ENCODE measurements at regions of chr4 and their contacts with region 1.

Region 1: GRCh38 chr4:74098450-74098994 is 473 bp downstream of the CXCL2 start:
- DNase-seq: peak in 1 of 4 experiments; percentile 37
- ATAC-seq: no peak
- H3K4me3 ChIP-seq: peak overlapping the region; percentile 75
- H3K27ac ChIP-seq: peak overlapping the region; percentile 93
- H3K4me1 ChIP-seq: peaks cover 17 to 39% of the 10 kb centered on the region in 2 experiments; a peak in 4 of 5 replicates
- H3K27me3 ChIP-seq: no peaks in the 10 kb centered on the region
- CTCF ChIP-seq: no peak
- EP300 ChIP-seq: no peak
- POLR2A ChIP-seq: no peak
- RAD21 ChIP-seq: no peak

Region 2: GRCh38 chr4:73704314-73705055 is 394.0 kb before region 1 on chr4:
- CTCF ChIA-PET with region 1: no interaction called
- POLR2A ChIA-PET with region 1: no interaction called
- in situ Hi-C with region 1: no loop called
- intact Hi-C with region 1: loop called (anchors 5 kb)
- DNase-seq: peak; percentile 28 to 88 (median 47)
- ATAC-seq: peak; percentile 82
- H3K4me3 ChIP-seq: no peak overlapping the region
- H3K27ac ChIP-seq: peak overlapping the region; percentile 84
- H3K4me1 ChIP-seq: peaks cover 0 to 68% of the 10 kb centered on the region in 2 experiments; a peak in 4 of 5 replicates
- H3K27me3 ChIP-seq: no peaks in the 10 kb centered on the region
- CTCF ChIP-seq: no peak
- EP300 ChIP-seq: peak; percentile 96
- POLR2A ChIP-seq: no peak
- RAD21 ChIP-seq: peak in 1 of 2 experiments; percentile 27; a peak in 2 of 4 replicates

Region 3: DNA sequence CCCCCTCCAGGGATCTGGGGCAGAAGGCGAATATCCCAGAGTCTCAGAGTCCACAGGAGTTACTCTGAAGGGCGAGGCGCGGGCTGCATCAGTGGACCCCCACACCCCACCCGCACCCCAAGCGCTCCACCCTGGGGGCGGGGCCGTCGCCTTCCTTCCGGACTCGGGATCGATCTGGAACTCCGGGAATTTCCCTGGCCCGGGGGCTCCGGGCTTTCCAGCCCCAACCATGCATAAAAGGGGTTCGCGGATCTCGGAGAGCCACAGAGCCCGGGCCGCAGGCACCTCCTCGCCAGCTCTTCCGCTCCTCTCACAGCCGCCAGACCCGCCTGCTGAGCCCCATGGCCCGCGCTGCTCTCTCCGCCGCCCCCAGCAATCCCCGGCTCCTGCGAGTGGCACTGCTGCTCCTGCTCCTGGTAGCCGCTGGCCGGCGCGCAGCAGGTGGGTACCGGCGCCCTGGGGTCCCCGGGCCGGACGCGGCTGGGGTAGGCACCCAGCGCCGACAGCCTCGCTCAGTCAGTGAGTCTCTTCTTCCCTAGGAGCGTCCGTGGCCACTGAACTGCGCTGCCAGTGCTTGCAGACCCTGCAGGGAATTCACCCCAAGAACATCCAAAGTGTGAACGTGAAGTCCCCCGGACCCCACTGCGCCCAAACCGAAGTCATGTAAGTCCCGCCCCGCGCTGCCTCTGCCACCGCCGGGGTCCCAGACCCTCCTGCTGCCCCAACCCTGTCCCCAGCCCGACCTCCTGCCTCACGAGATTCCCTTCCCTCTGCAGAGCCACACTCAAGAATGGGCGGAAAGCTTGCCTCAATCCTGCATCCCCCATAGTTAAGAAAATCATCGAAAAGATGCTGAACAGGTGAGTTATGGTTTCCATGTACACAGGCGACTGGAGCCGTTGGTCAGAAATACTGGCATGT is 229.1 kb before region 1 on chr4 and contains the start of gene CXCL1:
- CTCF ChIA-PET with region 1: no interaction called
- POLR2A ChIA-PET with region 1: no interaction called
- in situ Hi-C with region 1: no loop called
- intact Hi-C with region 1: loop called (anchors 5 kb)
- DNase-seq: peak; percentile 37 to 68 (median 51)
- ATAC-seq: peak; percentile 95
- H3K4me3 ChIP-seq: peak within 1 kb of the TSS; percentile 54
- H3K27ac ChIP-seq: no peak within 1 kb of the TSS
- H3K4me1 ChIP-seq: peaks cover 9 to 11% of the 10 kb centered on the region in 2 experiments; a peak in 4 of 5 replicates
- H3K27me3 ChIP-seq: no peaks in the 10 kb centered on the region
- CTCF ChIP-seq: peak in 2 of 3 experiments; percentile 49 to 69; a peak in 4 of 6 replicates
- EP300 ChIP-seq: no peak
- POLR2A ChIP-seq: no peak
- RAD21 ChIP-seq: peak in 1 of 2 experiments; percentile 32
- polyA plus RNA-seq, gene CXCL1: 0.07 TPM in 1 of 2 experiments, not detected in the other

Region 4: GRCh38 chr4:74056858-74057562 is 41.5 kb before region 1 on chr4:
- CTCF ChIA-PET with region 1: no interaction called
- POLR2A ChIA-PET with region 1: interaction called, 17 read pairs
- in situ Hi-C with region 1: no loop called
- intact Hi-C with region 1: loop called (anchors 1 kb)
- DNase-seq: peak; percentile 42 to 73 (median 59)
- ATAC-seq: peak; percentile 78
- H3K4me3 ChIP-seq: no peak overlapping the region
- H3K27ac ChIP-seq: peak overlapping the region; percentile 98
- H3K4me1 ChIP-seq: peaks cover 15 to 47% of the 10 kb centered on the region in 2 experiments
- H3K27me3 ChIP-seq: no peaks in the 10 kb centered on the region
- CTCF ChIP-seq: no peak
- EP300 ChIP-seq: peak; percentile 86
- POLR2A ChIP-seq: no peak
- RAD21 ChIP-seq: no peak

Region 5: DNA sequence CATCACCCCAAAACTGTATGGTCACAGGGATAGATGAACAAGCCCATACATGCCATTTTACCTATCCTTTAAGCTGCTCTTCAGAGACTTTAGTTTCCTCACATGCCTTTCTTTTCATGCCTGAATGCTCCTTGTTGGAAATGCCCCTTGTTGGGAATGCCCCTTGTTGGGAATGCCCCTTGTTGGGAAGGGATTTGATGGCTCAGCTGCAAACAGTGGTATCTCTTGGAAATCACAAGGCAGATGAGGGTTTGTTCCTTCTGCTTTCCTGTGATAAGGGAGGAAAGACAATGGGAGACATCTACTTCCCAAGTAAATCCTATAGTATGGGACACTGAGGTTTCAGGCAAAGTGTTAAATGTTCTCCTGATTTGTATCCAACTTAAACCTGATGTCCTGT is 11.0 kb before region 1 on chr4:
- CTCF ChIA-PET with region 1: no interaction called
- POLR2A ChIA-PET with region 1: interaction called, 18 read pairs
- in situ Hi-C with region 1: no loop called
- intact Hi-C with region 1: no loop called
- DNase-seq: no peak
- ATAC-seq: no peak
- H3K4me3 ChIP-seq: no peak overlapping the region
- H3K27ac ChIP-seq: no peak overlapping the region
- H3K4me1 ChIP-seq: peaks cover 0 to 11% of the 10 kb centered on the region in 2 experiments; a peak in 3 of 5 replicates
- H3K27me3 ChIP-seq: no peaks in the 10 kb centered on the region
- CTCF ChIP-seq: no peak
- EP300 ChIP-seq: no peak
- POLR2A ChIP-seq: no peak
- RAD21 ChIP-seq: no peak

Region 6: GRCh38 chr4:74283614-74284013 is 185.1 kb after region 1 on chr4:
- CTCF ChIA-PET with region 1: no interaction called
- POLR2A ChIA-PET with region 1: no interaction called
- in situ Hi-C with region 1: no loop called
- intact Hi-C with region 1: no loop called
- DNase-seq: peak in 1 of 4 experiments; percentile 10
- ATAC-seq: no peak
- H3K4me3 ChIP-seq: no peak overlapping the region
- H3K27ac ChIP-seq: no peak overlapping the region
- H3K4me1 ChIP-seq: peaks cover 0 to 5% of the 10 kb centered on the region in 2 experiments; a peak in 2 of 5 replicates
- H3K27me3 ChIP-seq: no peaks in the 10 kb centered on the region
- CTCF ChIP-seq: no peak
- EP300 ChIP-seq: no peak
- POLR2A ChIP-seq: no peak
- RAD21 ChIP-seq: no peak

Measured in K562 (cell line).